ENCODE measurements at regions of chr14 and their contacts with region 1.

Region 1: DNA sequence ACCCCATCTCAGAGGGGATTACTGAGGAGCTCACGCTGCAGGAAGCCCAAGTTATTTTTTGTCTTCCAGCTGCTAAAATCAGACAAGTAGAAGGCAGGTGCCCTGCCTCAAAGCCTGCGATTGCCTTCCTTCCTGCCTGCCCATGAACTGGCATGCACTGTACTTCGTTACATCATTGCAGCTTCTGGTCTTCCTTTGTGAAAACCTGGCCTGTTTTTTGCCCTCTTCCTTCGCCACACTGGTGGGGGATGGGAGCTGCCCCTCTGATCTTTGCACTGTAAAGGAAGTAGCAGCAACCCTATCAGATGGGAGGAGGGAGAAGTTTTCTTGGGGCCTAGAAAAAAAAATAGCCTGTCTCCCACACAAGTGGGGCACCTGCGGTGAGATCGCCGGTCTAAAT is 1098.7 kb downstream of the BCL11B start:
- DNase-seq: no peak
- H3K4me3 ChIP-seq: no peak overlapping the region
- CTCF ChIP-seq: no peak
- POLR2A ChIP-seq: no peak

Region 2: DNA sequence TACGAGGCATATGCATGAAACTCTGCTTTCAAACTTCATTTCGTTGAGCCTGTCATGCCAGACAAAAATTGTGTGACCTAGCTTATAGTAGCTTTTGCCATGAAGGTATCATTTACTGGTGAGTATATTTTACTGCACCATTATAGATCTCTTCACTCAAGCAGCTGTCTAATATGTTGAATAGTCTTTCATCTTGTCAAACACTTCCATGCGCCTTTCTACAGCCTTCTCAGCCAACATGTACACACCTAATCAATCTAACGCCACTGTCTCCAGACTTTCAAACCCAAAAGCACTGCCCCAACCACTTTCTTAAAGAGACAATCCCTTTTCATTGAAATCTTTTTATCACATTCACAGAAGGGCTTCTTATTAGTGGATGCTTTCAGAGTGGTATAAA is 618.7 kb before region 1 on chr14:
- intact Hi-C with region 1: no loop called
- DNase-seq: no peak
- H3K4me3 ChIP-seq: no peak overlapping the region
- CTCF ChIP-seq: no peak
- POLR2A ChIP-seq: no peak

Region 3: GRCh38 chr14:98035396-98035795 is 137.9 kb before region 1 on chr14:
- intact Hi-C with region 1: no loop called
- DNase-seq: no peak
- H3K4me3 ChIP-seq: no peak overlapping the region
- CTCF ChIP-seq: no peak
- POLR2A ChIP-seq: no peak

Region 4: DNA sequence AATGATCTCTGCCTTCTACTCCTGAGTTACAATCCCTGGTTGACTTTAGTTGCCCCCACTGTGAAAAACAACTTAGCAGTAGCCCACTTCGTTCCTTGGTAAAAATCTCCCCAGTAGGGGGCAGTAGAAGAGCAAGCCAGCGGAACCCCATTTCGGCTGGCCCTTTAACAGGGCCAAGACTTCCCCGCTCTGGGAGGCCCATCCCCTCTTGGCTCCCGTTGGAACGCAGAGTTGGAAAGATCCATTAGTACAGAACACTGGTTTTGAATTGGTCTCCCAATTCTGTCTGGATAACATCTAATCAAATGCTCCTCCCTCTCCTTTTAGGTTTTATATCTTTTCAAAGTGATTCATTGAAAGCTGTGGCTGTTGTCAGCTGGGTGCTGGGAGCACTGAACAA is 34.6 kb before region 1 on chr14:
- intact Hi-C with region 1: no loop called
- DNase-seq: peak in 1 of 2 donors; percentile 47
- H3K4me3 ChIP-seq: no peak overlapping the region
- CTCF ChIP-seq: no peak
- POLR2A ChIP-seq: no peak

Region 5: DNA sequence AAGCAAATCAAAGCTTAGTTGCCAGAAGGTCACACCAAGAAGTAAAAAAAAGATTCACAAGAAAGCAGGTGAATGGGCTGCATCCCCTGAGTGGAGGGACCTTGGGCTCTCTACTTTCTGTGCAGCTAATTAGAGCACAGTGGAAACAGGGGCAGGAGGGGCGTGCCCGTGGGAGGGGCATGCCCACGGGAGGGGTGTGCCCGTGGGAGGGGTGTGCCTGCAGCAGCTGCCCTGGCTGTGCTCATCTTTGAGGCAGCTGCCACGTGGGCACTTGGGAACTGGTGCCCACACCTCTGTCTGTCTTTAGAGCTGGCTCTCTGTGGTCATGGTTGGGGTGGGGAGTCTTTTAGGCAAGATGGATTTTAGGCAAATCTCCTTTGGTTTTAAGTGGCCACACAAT is 1679.9 kb after region 1 on chr14:
- intact Hi-C with region 1: loop called (anchors 10 kb)
- DNase-seq: no peak
- H3K4me3 ChIP-seq: no peak overlapping the region
- CTCF ChIP-seq: no peak
- POLR2A ChIP-seq: no peak

Measured in lower leg skin (tissue), 4 donors.